ENCODE measurements at regions of chr20 and their contacts with region 1.

Region 1: GRCh38 chr20:32918296-32918695 is 59.6 kb downstream of the EFCAB8 start:
- DNase-seq: no peak
- H3K4me3 ChIP-seq: no peak overlapping the region
- H3K27ac ChIP-seq: no peak overlapping the region
- H3K4me1 ChIP-seq: no peaks in the 10 kb centered on the region
- H3K27me3 ChIP-seq: no peaks in the 10 kb centered on the region
- CTCF ChIP-seq: no peak
- POLR2A ChIP-seq: no peak

Region 2: DNA sequence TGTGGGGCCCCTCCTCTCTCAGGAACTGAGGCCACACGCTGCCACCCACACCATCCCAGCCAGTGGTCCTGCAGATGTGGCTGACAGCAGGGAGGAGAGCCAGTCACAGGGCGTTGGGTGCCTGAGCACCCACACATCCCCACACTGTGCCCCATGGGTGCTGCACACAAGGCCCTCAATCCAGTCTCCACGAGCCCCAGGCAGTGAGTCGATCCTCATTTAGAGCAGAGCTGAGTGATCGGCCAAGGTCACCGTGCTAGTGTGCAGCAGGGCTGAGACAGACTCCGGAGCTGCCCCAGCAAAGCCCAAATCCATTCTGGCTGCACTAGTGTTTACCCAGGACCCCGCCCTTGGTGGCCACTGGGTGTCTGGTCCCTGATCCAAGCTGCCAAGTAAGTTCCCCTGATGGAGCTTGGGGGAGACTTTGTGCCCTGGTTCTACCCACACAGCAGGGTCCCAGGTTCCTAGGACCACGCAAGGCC is 253.6 kb before region 1 on chr20:
- intact Hi-C with region 1: no loop called
- DNase-seq: no peak
- H3K4me3 ChIP-seq: no peak overlapping the region
- H3K27ac ChIP-seq: no peak overlapping the region
- H3K4me1 ChIP-seq: no peaks in the 10 kb centered on the region
- H3K27me3 ChIP-seq: no peaks in the 10 kb centered on the region
- CTCF ChIP-seq: no peak
- POLR2A ChIP-seq: no peak

Region 3: GRCh38 chr20:33076662-33077372 is 158.5 kb after region 1 on chr20:
- intact Hi-C with region 1: loop called (anchors 10 kb)
- DNase-seq: no peak
- H3K4me3 ChIP-seq: no peak overlapping the region
- H3K27ac ChIP-seq: no peak overlapping the region
- H3K4me1 ChIP-seq: no peaks in the 10 kb centered on the region
- H3K27me3 ChIP-seq: peaks cover 0 to 13% of the 10 kb centered on the region in 2 donors
- CTCF ChIP-seq: peak in 2 of 3 donors; percentile 17 to 39
- POLR2A ChIP-seq: no peak